ENCODE measurements at regions of chr6 and their contacts with region 1.

Region 1: GRCh38 chr6:111580826-111581505 is 24.7 kb downstream of the TRAF3IP2 start:
- DNase-seq: no peak
- CTCF ChIP-seq: no peak

Region 2: DNA sequence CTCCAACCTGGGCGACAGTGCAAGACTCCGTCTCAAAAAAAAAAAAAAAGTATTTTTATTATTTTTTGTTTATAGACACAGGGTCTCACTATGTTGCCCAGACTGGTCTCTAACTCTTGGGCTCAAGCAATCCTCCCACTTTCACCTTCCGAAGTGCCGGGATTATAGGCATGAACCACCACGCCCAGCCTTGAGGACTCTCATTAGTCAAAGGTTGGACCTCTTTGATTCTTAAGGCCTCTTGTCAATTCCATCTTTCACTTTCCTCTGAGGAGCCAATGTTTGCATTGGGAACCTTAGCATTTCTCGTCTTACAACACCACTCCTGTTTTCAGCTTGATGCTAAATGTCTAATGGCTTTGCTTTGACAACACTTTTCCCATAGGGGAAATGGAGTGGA is 749.6 kb before region 1 on chr6:
- CTCF ChIA-PET with region 1: no interaction called
- POLR2A ChIA-PET with region 1: no interaction called
- DNase-seq: no peak
- CTCF ChIP-seq: no peak

Region 3: DNA sequence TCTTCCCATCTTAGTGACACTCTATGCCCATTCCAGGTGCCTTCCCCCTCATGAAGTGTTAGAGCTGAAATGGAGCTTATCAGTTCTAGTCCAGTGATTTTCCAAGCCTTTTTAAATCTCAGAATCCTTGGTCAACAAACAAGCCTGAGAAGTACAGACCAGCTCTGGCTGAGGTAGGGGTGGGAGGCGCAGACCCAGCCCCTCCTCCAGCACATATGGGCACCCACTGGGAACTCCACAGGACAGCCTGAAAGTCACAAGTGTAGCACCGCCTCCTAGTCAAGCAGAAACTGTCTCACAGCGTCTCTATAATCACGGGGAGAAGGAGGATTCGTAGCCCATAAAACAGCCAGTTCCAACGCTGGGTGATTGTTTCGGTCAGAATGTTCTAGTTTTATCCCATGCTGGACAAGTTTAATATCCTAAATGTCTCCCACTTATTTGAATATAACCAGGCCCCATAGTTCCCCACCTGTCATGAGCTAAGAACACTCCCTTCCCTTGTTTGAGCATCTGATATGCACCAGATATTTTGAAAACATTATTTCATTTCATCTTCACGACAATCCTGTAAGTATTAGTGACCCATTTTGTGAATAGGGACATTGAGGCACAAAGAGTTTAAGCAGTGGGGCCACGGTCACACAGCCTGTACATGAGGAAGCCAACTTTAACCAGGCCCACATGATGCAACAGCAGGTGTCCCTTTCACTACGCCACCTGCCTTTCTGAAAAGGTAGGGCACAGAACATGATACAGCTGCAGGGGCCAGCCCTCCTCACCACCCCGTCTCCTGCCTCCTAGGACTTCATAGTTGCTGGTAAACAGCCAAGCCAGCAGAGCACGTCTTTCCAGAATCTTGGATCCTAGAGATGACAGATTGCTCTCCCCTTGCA is 15.4 kb before region 1 on chr6:
- CTCF ChIA-PET with region 1: interaction called, 12 read pairs
- POLR2A ChIA-PET with region 1: no interaction called
- DNase-seq: peak; percentile 62
- CTCF ChIP-seq: peak; percentile 35

Measured in GM10248 (cell line).